ENCODE measurements at regions of chr20 and their contacts with region 1.

Region 1: DNA sequence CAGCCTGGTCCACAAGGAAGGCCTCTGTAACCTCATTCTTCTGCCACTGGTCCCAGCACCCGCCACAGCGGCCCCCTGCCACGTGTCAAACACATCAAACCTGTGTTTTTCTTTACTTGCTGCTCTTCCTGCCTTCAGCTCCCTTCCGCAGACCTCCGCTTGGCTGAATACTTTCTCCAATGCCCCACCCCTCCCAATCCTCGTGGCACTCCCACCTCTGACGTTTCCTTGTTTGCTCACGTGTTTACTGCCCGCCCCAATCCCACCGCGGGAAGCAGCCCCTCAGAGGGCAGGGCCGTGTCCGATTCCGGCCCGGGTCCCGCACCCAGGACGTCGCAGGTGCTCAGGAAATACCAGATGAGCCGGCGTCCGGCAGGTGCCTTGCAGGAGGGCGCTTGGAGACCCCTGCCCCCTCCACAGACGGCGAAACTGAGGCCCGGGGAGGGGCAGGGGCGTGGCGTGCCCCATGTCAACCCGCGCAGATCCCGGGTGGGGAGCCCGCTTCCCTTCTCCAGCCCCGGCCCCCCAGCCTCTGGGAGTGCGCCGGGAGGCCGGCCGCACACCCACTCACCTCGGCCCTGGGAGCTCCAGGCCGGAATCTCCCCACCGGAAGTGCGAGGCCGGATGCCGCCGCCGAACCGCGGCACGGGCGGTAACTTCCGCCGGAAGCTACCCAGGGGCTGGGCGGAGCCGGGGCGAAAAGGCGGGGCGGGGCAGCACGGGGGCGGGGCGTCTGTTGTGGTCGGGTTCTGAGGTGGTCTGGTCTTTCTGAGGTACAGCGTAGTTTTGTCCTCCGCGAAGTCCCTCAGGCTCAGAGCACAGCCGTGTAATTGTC is 42.4 kb downstream of the ELMO2 start:
- H3K4me3 ChIP-seq: peak overlapping the region; percentile 96
- H3K27ac ChIP-seq: peak overlapping the region; percentile 86
- H3K4me1 ChIP-seq: peaks cover 6% of the 10 kb centered on the region
- CTCF ChIP-seq: no peak; the same call in 1 of the 2 replicates

Region 2: DNA sequence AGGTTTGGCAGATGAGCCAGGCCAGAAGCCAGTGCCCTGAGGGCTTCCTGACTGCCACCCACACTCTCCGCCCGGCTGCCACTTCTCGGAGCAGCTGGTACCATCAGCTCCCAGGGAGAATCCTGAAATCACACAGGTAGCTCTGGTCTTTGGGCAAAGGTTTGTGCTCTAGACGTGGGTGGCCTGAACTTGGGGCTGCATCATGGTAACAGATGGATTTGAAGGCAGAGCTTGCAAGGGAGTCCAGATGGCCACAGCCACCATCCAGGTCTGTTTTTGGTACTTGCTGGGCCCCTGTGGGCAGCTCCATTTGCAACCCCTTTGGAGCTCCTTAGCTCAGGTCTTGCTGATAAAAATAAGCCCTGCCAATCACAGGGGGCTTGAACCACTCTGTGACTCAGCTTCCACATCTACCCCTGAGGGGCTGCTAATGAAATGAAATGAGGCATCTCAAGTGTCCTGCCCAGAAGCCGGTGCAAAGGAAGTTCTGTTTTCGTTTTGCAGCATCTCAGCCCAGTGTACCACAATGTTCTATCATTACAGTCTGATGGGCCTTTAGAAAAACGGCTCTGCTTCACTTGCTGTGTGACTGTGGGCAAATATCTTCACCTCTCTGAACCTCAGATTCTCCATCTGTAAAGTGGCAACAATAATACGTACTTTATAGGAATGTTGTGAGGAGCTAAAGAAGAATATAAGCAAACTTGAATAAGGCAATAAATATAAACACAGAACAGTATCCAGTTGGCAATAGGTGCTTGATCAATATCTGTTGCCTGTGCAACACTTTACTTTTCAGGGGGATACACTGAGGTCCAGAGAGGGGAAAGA is 30.6 kb before region 1 on chr20:
- CTCF ChIA-PET with region 1: no interaction called
- POLR2A ChIA-PET with region 1: no interaction called
- H3K4me3 ChIP-seq: no peak overlapping the region
- H3K27ac ChIP-seq: no peak overlapping the region
- H3K4me1 ChIP-seq: no peaks in the 10 kb centered on the region
- CTCF ChIP-seq: no peak

Region 3: DNA sequence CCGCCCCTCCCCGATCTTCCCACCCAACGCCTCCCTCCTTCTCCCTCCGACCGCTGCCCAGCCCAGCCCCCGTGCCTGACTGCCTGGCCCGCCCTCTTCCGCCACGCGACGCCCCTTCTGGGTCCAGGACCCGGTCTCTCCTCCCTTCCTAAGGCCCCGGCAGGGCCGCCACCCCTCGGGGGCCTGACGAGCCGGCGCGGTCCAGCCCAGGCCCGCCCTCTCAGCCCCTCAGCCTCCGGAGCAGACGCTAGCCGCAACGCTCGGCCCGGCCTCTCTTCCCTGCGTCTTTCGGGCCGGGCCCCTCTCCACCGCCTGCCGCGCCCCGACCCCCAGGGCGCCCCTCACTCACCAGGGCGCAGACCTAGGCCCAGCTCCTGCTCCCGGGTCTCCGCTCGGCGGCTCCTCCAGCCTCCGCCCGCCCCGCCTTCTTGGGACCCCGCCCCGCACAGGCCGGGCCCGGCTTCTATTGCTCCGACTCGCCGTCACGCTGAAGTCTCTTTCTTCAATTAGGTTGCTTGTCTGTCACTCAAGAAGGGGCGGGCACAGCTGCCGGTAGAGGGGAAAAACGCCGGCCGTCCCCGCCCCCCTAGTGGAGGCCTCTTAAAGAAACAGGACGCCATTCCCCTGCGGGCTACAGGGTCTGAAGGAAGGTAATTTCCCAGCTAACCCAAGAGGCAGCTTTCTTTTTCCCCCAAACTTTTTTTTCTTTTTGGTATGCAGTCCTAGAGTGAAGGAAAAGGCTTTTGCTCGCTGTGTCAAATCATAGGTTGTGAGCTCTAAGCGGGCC is 42.4 kb after region 1 on chr20 and contains the start of gene ELMO2:
- CTCF ChIA-PET with region 1: interaction called, 4 read pairs
- POLR2A ChIA-PET with region 1: interaction called, 24 read pairs
- H3K4me3 ChIP-seq: peak within 1 kb of the TSS; percentile 97
- H3K27ac ChIP-seq: peak within 1 kb of the TSS; percentile 77
- H3K4me1 ChIP-seq: no peaks in the 10 kb centered on the region
- CTCF ChIP-seq: no peak; the same call in 1 of the 2 replicates

Region 4: GRCh38 chr20:46446851-46447250 is 82.8 kb after region 1 on chr20:
- CTCF ChIA-PET with region 1: no interaction called
- POLR2A ChIA-PET with region 1: no interaction called
- H3K4me3 ChIP-seq: no peak overlapping the region
- H3K27ac ChIP-seq: no peak overlapping the region
- H3K4me1 ChIP-seq: no peaks in the 10 kb centered on the region
- CTCF ChIP-seq: no peak